K562 (cell line): ENCODE measurements at regions of chr18 and their contacts with region 1.

Region 1: DNA sequence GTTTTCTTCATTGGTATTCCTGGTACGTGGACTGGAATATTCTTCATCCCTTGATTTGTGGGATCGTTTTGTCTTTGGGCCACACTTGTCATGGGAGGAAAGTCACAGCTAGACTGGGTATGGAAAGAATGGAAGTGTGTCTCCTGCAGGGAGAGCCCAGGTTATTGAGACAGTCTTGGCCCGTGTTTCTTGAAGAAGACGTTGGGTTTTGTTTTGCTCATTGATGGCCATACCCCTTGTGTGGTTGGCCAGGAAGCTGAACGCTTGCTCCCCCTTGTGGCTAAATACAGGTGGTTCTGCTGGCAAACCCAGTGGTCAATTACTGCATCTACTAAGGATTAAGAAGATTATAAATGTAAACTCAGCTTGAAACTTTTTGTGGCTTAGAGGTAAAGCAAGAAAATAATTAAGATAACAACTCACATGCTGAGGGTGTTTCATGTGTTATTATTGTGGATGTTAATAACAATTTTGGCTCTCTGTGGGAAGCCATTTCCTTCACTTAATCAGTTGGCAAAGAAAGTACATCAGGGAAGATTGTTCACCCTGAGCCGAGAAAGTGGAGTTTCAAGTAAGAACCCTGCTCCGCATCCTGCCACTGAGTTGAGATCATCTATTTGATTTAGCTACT is 91.8 kb downstream of the NEDD4L start:
- DNase-seq: peak; percentile 67 to 80 (median 75)
- ATAC-seq: peak; percentile 94
- H3K4me3 ChIP-seq: no peak overlapping the region
- H3K27ac ChIP-seq: no peak overlapping the region
- H3K4me1 ChIP-seq: peaks cover 0 to 6% of the 10 kb centered on the region in 2 experiments; a peak in 2 of 5 replicates
- H3K27me3 ChIP-seq: no peaks in the 10 kb centered on the region
- CTCF ChIP-seq: peak; percentile 80 to 93 (median 83)
- EP300 ChIP-seq: no peak
- POLR2A ChIP-seq: no peak
- RAD21 ChIP-seq: peak; percentile 61 to 65

Region 2: GRCh38 chr18:57959278-57959677 is 176.5 kb before region 1 on chr18:
- CTCF ChIA-PET with region 1: interaction called, 3 read pairs
- POLR2A ChIA-PET with region 1: no interaction called
- in situ Hi-C with region 1: no loop called
- intact Hi-C with region 1: loop called (anchors 5 kb)
- DNase-seq: peak in 2 of 4 experiments; percentile 31 to 50
- ATAC-seq: peak; percentile 84
- H3K4me3 ChIP-seq: no peak overlapping the region
- H3K27ac ChIP-seq: no peak overlapping the region
- H3K4me1 ChIP-seq: no peaks in the 10 kb centered on the region
- H3K27me3 ChIP-seq: peaks cover 0 to 13% of the 10 kb centered on the region in 2 experiments; a peak in 2 of 5 replicates
- CTCF ChIP-seq: peak; percentile 41 to 56 (median 47); a peak in 5 of 6 replicates
- EP300 ChIP-seq: no peak
- POLR2A ChIP-seq: no peak
- RAD21 ChIP-seq: peak; percentile 43 to 65

Region 3: DNA sequence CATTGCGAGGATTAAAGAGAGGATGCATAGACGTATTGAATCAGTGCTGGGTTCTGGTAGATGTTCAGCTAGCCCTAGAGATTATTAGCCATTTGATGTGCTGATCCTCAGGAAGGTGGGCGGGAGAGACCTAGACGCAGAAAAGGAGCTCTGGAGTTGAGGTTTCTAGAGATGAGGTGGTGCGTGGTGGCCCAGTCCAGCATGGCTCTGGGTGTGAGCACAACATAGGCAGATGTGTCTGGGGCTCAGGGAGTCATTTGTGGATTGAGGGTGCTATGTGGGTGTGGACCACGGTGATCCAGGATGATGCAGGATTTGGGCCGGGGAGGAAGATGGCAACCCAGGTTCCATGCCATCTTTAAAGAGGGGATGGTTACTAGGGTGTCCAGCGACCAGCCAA is 10.3 kb after region 1 on chr18:
- CTCF ChIA-PET with region 1: no interaction called
- POLR2A ChIA-PET with region 1: no interaction called
- in situ Hi-C with region 1: no loop called
- intact Hi-C with region 1: no loop called
- DNase-seq: no peak
- ATAC-seq: no peak
- H3K4me3 ChIP-seq: no peak overlapping the region
- H3K27ac ChIP-seq: no peak overlapping the region
- H3K4me1 ChIP-seq: no peaks in the 10 kb centered on the region; a peak in 1 of 5 replicates
- H3K27me3 ChIP-seq: no peaks in the 10 kb centered on the region
- CTCF ChIP-seq: no peak
- EP300 ChIP-seq: no peak
- POLR2A ChIP-seq: no peak
- RAD21 ChIP-seq: no peak

Region 4: GRCh38 chr18:58180738-58181353 is 45.0 kb after region 1 on chr18:
- CTCF ChIA-PET with region 1: interaction called, 7 read pairs
- POLR2A ChIA-PET with region 1: no interaction called
- in situ Hi-C with region 1: no loop called
- intact Hi-C with region 1: loop called (anchors 1 kb)
- DNase-seq: peak; percentile 51 to 62 (median 57)
- ATAC-seq: peak; percentile 66
- H3K4me3 ChIP-seq: no peak overlapping the region
- H3K27ac ChIP-seq: no peak overlapping the region
- H3K4me1 ChIP-seq: peaks cover 0 to 6% of the 10 kb centered on the region in 2 experiments; a peak in 3 of 5 replicates
- H3K27me3 ChIP-seq: no peaks in the 10 kb centered on the region
- CTCF ChIP-seq: peak; percentile 54 to 77 (median 73)
- EP300 ChIP-seq: no peak
- POLR2A ChIP-seq: no peak
- RAD21 ChIP-seq: peak; percentile 59 to 75

Region 5: GRCh38 chr18:58231930-58232329 is 96.1 kb after region 1 on chr18:
- CTCF ChIA-PET with region 1: interaction called, 3 read pairs
- POLR2A ChIA-PET with region 1: no interaction called
- in situ Hi-C with region 1: no loop called
- intact Hi-C with region 1: loop called (anchors 5 kb)
- DNase-seq: peak; percentile 24 to 53 (median 40)
- ATAC-seq: peak; percentile 94
- H3K4me3 ChIP-seq: no peak overlapping the region
- H3K27ac ChIP-seq: no peak overlapping the region
- H3K4me1 ChIP-seq: no peaks in the 10 kb centered on the region
- H3K27me3 ChIP-seq: no peaks in the 10 kb centered on the region
- CTCF ChIP-seq: peak; percentile 44 to 66 (median 52)
- EP300 ChIP-seq: no peak
- POLR2A ChIP-seq: no peak
- RAD21 ChIP-seq: peak; percentile 16 to 65